Breast epithelium (tissue), 4 donors: ENCODE measurements at regions of chr2 and their contacts with region 1.

Region 1: DNA sequence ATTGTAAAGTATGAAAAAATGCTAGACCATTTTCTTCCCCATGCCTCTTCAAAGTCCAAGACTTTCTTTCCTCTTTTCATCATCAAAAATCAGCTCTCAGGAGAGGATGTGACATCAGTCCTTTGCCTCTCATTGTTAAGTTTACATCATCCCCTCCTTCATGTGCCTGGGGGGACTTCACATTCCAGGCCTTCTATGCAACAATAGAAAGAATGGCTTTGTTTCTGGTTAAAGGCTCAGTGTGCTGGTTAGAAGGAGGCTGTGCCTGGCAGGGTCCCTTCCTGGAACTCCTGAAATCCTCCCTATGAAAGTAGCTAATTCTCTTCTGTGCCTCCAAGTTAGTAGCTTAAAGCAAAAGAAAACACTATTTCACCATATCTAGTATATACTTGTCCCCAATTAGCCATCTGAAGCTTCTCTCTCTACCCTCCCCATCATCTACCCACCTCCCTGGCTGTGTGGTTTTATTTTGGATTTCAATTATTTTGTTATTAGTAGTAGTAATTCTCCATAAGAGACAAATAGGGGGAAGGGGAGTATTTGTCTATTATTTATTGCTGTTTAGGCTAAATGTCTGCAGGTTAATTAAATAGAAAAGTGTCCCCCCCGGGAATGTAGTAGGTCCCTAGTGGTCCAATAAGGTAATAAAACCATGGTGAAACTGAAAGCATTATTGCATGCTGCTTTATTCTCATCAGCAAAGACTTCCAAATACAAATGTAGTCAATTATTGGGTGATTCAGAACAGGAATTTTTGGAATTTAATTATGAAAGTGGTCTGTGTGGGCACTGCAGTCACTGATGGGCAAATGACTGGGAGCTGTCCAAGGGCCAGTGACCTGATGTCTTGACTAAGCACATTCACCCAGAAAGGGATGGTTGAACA is 69.0 kb downstream of the CPO start:
- DNase-seq: peak in 1 of 2 donors; percentile 30
- H3K4me3 ChIP-seq: no peak overlapping the region
- H3K27ac ChIP-seq: peak overlapping the region; percentile 17 to 43
- H3K4me1 ChIP-seq: no peaks in the 10 kb centered on the region
- H3K27me3 ChIP-seq: no peaks in the 10 kb centered on the region
- CTCF ChIP-seq: peak in 2 of 3 donors; percentile 6 to 11
- POLR2A ChIP-seq: no peak

Region 2: DNA sequence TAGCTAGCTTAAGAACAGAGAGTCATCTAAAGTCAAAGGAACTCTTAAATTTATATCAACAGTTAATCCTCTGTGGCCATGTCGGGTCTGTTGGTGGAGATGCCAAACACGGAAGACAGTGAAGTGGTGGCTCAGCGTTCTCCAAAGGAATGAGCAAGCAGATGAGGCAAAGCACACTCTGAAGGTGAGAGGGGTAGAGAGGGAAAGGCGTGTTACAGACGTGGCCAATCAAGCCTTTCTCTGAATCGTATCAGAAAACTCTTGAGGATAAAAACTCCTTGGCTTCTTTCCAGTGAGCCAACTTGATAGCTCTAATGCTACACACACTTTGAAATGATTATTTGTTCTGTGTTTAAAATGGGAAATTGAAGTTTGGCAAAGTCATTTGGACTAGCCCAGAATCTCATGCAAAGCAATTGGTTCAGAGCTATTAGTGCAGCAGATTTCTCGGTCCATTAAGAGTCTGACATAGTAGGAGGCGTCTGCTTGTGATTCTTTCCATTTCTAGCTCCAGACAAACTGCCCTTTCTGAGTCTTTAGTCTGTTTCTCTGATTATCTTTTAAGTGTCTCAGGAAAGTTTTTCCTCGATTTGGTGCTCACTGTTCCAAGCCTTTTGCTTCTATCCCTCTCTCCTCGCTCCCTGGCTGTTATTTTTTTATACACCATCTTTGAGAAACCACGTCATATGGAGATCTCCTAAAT is 126.5 kb before region 1 on chr2:
- intact Hi-C with region 1: loop called (anchors 10 kb)
- DNase-seq: no peak
- H3K4me3 ChIP-seq: no peak overlapping the region
- H3K27ac ChIP-seq: no peak overlapping the region
- H3K4me1 ChIP-seq: no peaks in the 10 kb centered on the region
- H3K27me3 ChIP-seq: no peaks in the 10 kb centered on the region
- CTCF ChIP-seq: no peak
- POLR2A ChIP-seq: no peak